ENCODE measurements at regions of chr11 and their contacts with region 1.

Region 1: DNA sequence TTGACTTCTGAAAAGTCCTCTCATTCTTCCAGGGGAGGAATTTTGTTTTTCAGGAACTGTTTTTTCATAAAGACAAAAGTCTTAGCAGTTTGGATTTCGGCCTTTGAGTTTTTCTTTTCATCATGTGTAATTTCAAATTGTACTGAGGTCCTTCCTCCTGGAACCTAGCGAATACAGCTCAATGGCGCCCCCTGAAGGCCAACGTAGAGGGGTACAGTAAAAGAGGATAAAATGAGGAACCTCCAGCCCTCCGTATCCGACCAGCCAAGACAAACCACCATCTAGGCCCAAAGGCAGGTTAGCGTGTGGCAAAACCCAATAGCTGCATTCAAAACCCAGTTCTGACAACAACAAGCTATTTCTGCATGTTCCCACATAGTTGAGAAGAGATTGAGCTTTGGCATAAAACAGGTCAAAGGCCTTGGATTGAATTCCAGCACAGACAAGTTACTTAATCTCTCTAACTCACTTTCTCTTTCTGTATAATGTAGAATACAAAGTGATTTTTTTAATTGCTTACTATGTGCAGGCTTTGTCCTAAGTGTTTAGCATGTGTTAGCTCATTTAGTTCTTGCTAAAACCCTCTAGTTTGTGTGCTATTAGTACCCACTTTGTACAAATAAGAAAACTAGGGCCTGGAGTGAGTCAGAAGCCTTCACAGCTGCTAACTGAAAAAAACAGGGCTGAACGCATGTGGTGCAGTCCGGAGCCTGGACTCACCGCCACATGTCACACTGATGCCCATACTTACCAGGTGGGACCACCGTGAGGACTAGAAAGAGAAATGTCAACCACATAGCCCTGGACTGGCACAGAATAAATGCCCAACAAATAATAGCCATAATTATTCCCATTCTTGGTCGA is 43.2 kb upstream of the ETS1 start:
- DNase-seq: peak; percentile 44
- H3K4me3 ChIP-seq: no peak overlapping the region
- H3K27ac ChIP-seq: peak overlapping the region in 1 of 4 donors; percentile 34
- H3K4me1 ChIP-seq: peaks cover 0 to 24% (median 7%) of the 10 kb centered on the region in 3 donors
- H3K27me3 ChIP-seq: no peaks in the 10 kb centered on the region
- CTCF ChIP-seq: peak; percentile 81 to 94 (median 92)
- POLR2A ChIP-seq: no peak

Region 2: GRCh38 chr11:128157423-128158298 is 472.9 kb before region 1 on chr11:
- intact Hi-C with region 1: no loop called
- DNase-seq: no peak
- H3K4me3 ChIP-seq: peak overlapping the region in 1 of 4 donors; percentile 43
- H3K27ac ChIP-seq: no peak overlapping the region
- H3K4me1 ChIP-seq: peaks cover 0 to 9% (median 0%) of the 10 kb centered on the region in 3 donors
- H3K27me3 ChIP-seq: no peaks in the 10 kb centered on the region
- CTCF ChIP-seq: peak; percentile 72 to 90 (median 79)
- POLR2A ChIP-seq: no peak

Region 3: GRCh38 chr11:128172046-128172878 is 458.3 kb before region 1 on chr11:
- intact Hi-C with region 1: loop called (anchors 10 kb)
- DNase-seq: peak; percentile 11
- H3K4me3 ChIP-seq: no peak overlapping the region
- H3K27ac ChIP-seq: no peak overlapping the region
- H3K4me1 ChIP-seq: peaks cover 0 to 17% (median 0%) of the 10 kb centered on the region in 3 donors
- H3K27me3 ChIP-seq: peaks cover 0 to 10% (median 0%) of the 10 kb centered on the region in 4 donors
- CTCF ChIP-seq: peak; percentile 65 to 82 (median 75)
- POLR2A ChIP-seq: no peak